Esophagus muscularis mucosa (tissue), 4 donors: ENCODE measurements at regions of chr19 and their contacts with region 1.

Region 1: GRCh38 chr19:27974082-27974513 is 1238.9 kb downstream of the UQCRFS1 start:
- DNase-seq: no peak
- H3K4me3 ChIP-seq: no peak overlapping the region
- H3K27ac ChIP-seq: no peak overlapping the region
- H3K4me1 ChIP-seq: no peaks in the 10 kb centered on the region
- H3K27me3 ChIP-seq: peaks cover 0 to 8% (median 0%) of the 10 kb centered on the region in 4 donors
- CTCF ChIP-seq: peak in 2 of 3 experiments; percentile 28 to 32
- EP300 ChIP-seq: no peak
- POLR2A ChIP-seq: no peak

Region 2: DNA sequence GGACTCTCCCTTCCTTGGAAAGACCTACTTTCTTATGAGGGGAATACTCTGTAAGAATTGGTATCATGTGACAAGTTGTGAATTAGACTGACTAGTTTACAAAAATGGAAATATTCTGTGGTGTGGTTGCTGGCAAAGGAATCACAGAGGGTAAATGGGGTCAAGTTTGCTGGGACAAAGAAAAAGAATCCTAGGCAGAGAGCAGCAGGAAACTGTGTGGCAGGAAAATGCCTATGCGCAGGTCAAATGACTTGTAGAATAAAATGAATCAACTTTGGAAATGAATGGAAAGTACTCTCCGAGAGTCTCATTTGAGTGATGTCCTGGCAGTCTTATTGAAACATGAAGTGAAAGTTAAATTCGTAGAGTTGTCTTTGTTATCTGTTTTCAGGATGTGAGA is 11.8 kb before region 1 on chr19:
- intact Hi-C with region 1: no loop called
- DNase-seq: no peak
- H3K4me3 ChIP-seq: no peak overlapping the region
- H3K27ac ChIP-seq: no peak overlapping the region
- H3K4me1 ChIP-seq: peaks cover 0 to 8% (median 2%) of the 10 kb centered on the region in 4 donors
- H3K27me3 ChIP-seq: no peaks in the 10 kb centered on the region
- CTCF ChIP-seq: no peak
- EP300 ChIP-seq: no peak
- POLR2A ChIP-seq: no peak

Region 3: GRCh38 chr19:28009696-28010095 is 35.6 kb after region 1 on chr19:
- intact Hi-C with region 1: no loop called
- DNase-seq: no peak
- H3K4me3 ChIP-seq: no peak overlapping the region
- H3K27ac ChIP-seq: no peak overlapping the region
- H3K4me1 ChIP-seq: no peaks in the 10 kb centered on the region
- H3K27me3 ChIP-seq: no peaks in the 10 kb centered on the region
- CTCF ChIP-seq: no peak
- EP300 ChIP-seq: no peak
- POLR2A ChIP-seq: no peak

Region 4: GRCh38 chr19:28324275-28325060 is 350.4 kb after region 1 on chr19:
- intact Hi-C with region 1: loop called (anchors 2 kb)
- DNase-seq: no peak
- H3K4me3 ChIP-seq: no peak overlapping the region
- H3K27ac ChIP-seq: no peak overlapping the region
- H3K4me1 ChIP-seq: no peaks in the 10 kb centered on the region
- H3K27me3 ChIP-seq: peaks cover 0 to 14% (median 0%) of the 10 kb centered on the region in 4 donors
- CTCF ChIP-seq: no peak
- EP300 ChIP-seq: no peak
- POLR2A ChIP-seq: no peak

Region 5: GRCh38 chr19:28705008-28705407 is 730.9 kb after region 1 on chr19:
- intact Hi-C with region 1: loop called (anchors 5 kb)
- DNase-seq: no peak
- H3K4me3 ChIP-seq: no peak overlapping the region
- H3K27ac ChIP-seq: no peak overlapping the region
- H3K4me1 ChIP-seq: no peaks in the 10 kb centered on the region
- H3K27me3 ChIP-seq: no peaks in the 10 kb centered on the region
- CTCF ChIP-seq: no peak
- EP300 ChIP-seq: no peak
- POLR2A ChIP-seq: no peak